ENCODE measurements at regions of chr2 and their contacts with region 1.

Region 1: DNA sequence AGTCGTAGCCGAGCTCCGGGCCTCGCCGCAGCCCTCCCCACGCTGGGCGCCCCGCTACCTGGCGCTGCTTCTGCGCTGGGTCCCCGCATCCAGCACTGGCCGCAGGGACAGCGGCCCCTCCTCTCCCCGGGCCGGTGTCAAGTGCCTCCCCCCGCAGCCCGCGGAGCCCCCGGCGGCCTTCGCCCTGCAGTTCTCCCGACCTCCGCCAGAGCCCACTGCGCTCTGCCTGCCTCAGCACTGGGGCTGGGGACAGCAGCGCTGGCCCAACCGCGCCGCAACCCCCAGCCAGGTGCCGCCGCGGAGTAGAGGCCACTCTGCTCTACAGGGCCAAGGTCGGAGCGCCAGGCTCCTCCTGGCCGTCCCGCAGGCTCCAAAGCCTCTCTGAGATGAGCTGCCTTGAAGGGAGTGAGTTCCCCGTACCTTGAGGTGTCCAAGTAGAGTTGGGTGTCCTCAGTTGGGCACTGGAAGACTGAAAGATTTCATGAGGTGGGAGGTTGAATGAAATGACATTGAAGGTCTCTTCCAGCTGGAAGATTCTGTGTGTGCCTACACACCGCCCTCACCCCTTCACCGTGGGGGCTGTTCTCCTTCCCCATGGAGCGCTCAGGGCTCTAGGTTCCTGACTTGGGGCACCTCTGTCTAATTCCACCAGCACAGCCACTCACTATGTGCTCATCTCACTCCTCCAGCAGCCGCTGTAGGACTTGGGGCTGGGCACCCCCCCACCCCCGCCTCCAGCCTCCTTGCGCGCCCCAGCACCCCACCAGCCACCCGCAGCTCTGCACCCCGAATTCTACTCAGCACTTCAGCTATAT is 854 bp upstream of the DNMT3A start:
- DNase-seq: peak; percentile 99
- H3K4me3 ChIP-seq: peak overlapping the region; percentile 82 to 87
- H3K27ac ChIP-seq: peak overlapping the region in 1 of 2 experiments; percentile 93; a peak in 2 of 4 replicates
- H3K4me1 ChIP-seq: peaks cover 10 to 35% of the 10 kb centered on the region in 2 experiments; a peak in 2 of 4 replicates
- H3K27me3 ChIP-seq: no peaks in the 10 kb centered on the region
- CTCF ChIP-seq: peak; percentile 84
- EP300 ChIP-seq: peak in 1 of 2 experiments; percentile 38; a peak in 1 of 4 replicates
- RAD21 ChIP-seq: peak; percentile 83

Region 2: GRCh38 chr2:25309402-25309801 is 33.2 kb before region 1 on chr2:
- CTCF ChIA-PET with region 1: interaction called, 117 read pairs
- POLR2A ChIA-PET with region 1: interaction called, 20 read pairs
- DNase-seq: peak; percentile 85
- H3K4me3 ChIP-seq: no peak overlapping the region; a peak in 1 of 4 replicates
- H3K27ac ChIP-seq: peak overlapping the region in 1 of 2 experiments; percentile 53; a peak in 1 of 4 replicates
- H3K4me1 ChIP-seq: peaks cover 13 to 99% of the 10 kb centered on the region in 2 experiments; a peak in 3 of 4 replicates
- H3K27me3 ChIP-seq: no peaks in the 10 kb centered on the region
- CTCF ChIP-seq: peak; percentile 66
- EP300 ChIP-seq: no peak
- RAD21 ChIP-seq: peak; percentile 74

Region 3: DNA sequence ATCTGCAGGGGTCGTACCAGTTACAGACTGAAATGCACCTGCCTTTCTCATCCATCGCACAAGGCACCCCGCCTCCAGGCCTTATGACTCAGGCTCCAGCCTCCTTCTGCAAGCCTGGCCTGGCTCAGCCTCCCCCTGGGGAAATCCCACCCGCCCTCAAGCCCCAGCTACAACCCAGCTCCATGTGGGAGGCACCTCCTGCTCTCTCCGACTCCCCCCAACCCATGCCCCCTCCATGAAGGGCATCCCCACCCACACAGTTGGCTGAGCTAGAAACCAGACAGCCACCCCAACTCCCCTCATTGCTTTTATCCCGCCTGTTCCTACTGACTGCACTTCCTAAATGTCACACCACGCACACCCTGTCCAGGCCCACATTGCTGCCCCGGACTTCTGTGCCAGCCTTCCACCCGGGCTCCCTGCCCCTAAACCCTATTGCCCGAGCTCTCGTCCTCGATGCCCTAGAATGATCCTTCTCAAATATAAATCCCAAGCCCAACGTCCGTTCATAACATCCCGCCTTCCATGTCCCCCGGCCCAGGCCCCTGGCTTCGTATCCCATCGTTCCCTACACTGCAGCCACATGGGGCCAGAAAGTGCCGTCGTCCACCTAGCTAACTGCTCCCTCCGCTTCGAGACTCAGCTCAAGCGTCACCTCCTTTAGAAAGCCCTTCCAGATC is 10.8 kb before region 1 on chr2:
- CTCF ChIA-PET with region 1: interaction called, 14 read pairs
- POLR2A ChIA-PET with region 1: interaction called, 4 read pairs
- DNase-seq: no peak
- H3K4me3 ChIP-seq: no peak overlapping the region
- H3K27ac ChIP-seq: peak overlapping the region in 1 of 2 experiments; percentile 77; a peak in 1 of 4 replicates
- H3K4me1 ChIP-seq: peaks cover 0 to 67% of the 10 kb centered on the region in 2 experiments; a peak in 2 of 4 replicates
- H3K27me3 ChIP-seq: no peaks in the 10 kb centered on the region
- CTCF ChIP-seq: no peak
- EP300 ChIP-seq: no peak
- RAD21 ChIP-seq: no peak

Region 4: DNA sequence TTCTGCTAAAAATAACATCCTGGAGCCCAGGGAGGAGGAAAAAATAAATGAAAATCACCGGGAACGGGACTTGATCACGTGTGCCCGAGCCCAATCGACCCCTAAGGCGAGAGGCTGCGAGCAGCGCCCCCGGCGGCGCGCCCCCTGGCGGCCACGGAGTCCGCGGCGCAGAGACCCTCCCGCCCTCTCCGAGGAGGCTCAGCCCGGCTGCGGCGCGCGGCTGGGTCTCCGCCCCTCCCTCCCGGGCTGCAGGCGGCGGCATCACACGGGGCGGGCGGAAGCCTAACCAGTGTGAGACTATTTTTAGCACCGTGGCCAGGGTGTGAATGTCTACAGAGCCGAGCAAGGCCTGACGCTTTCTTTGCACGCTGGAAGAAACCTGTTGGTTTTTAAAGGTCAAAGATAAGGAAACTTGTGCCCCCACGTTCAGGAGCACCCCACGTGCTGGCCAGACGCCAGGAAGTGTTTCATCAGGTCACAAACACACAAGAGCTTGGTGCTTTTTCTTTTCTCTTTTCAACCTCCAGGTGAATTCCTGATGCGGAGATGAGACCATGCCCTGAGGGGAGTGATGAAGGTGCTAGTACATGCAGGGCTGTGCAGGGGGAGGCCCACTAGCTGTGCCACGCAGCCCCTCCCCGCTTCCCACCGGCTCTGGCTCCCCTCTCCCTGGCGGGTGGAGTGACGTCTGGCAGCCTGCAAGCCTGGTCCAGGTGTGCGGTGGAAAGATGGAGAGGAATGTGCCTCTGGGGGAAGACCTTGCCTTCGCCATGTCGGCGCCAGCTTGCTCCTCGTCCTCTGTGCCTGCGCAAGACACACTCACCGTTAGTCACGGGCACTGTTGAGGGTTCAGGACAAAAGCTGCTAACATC is 34.4 kb after region 1 on chr2:
- CTCF ChIA-PET with region 1: interaction called, 27 read pairs
- POLR2A ChIA-PET with region 1: interaction called, 4 read pairs
- DNase-seq: peak; percentile 99
- H3K4me3 ChIP-seq: peak overlapping the region; percentile 21 to 45; a peak in 3 of 4 replicates
- H3K27ac ChIP-seq: peak overlapping the region in 1 of 2 experiments; percentile 70; a peak in 2 of 4 replicates
- H3K4me1 ChIP-seq: peaks cover 5 to 36% of the 10 kb centered on the region in 2 experiments; a peak in 3 of 4 replicates
- H3K27me3 ChIP-seq: no peaks in the 10 kb centered on the region
- CTCF ChIP-seq: peak; percentile 99
- EP300 ChIP-seq: no peak
- RAD21 ChIP-seq: peak; percentile 73

Region 5: GRCh38 chr2:25552318-25552717 is 209.7 kb after region 1 on chr2:
- CTCF ChIA-PET with region 1: interaction called, 14 read pairs
- POLR2A ChIA-PET with region 1: no interaction called
- DNase-seq: no peak
- H3K4me3 ChIP-seq: no peak overlapping the region
- H3K27ac ChIP-seq: no peak overlapping the region
- H3K4me1 ChIP-seq: peaks cover 7 to 16% of the 10 kb centered on the region in 2 experiments
- H3K27me3 ChIP-seq: no peaks in the 10 kb centered on the region
- CTCF ChIP-seq: no peak
- EP300 ChIP-seq: no peak
- RAD21 ChIP-seq: no peak

Measured in SK-N-SH (cell line).